ENCODE measurements at regions of chr4 and their contacts with region 1.

Region 1: DNA sequence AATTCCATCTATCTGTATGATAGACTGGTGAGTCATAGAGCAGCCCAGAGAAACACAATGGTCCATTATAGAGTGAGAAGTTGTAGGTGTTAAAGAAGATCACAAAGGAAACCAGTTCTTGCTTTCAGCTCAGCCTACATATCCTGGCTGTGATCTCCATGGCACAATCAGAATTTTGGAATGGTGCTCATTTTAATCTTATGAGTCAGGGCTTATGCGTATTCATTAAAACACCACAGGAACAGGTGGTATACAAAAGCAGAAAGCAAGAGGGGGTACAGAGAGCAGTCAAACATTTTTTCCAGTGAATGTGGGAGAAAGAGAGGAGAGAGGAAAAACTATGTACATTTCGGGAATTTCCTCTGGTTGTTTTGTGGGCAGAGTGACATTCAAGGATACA is 126.9 kb downstream of the MFAP3L start:
- DNase-seq: peak; percentile 34
- ATAC-seq: peak; percentile 31; the same call in 1 of the 2 replicates
- H3K4me3 ChIP-seq: no peak overlapping the region
- H3K27ac ChIP-seq: no peak overlapping the region
- H3K4me1 ChIP-seq: no peaks in the 10 kb centered on the region
- H3K27me3 ChIP-seq: peaks cover 17% of the 10 kb centered on the region
- CTCF ChIP-seq: no peak

Region 2: GRCh38 chr4:169940450-169940849 is 41.2 kb after region 1 on chr4:
- CTCF ChIA-PET with region 1: no interaction called
- POLR2A ChIA-PET with region 1: no interaction called
- intact Hi-C with region 1: no loop called
- DNase-seq: no peak
- ATAC-seq: no peak
- H3K4me3 ChIP-seq: no peak overlapping the region
- H3K27ac ChIP-seq: no peak overlapping the region
- H3K4me1 ChIP-seq: no peaks in the 10 kb centered on the region
- H3K27me3 ChIP-seq: no peaks in the 10 kb centered on the region
- CTCF ChIP-seq: no peak

Region 3: DNA sequence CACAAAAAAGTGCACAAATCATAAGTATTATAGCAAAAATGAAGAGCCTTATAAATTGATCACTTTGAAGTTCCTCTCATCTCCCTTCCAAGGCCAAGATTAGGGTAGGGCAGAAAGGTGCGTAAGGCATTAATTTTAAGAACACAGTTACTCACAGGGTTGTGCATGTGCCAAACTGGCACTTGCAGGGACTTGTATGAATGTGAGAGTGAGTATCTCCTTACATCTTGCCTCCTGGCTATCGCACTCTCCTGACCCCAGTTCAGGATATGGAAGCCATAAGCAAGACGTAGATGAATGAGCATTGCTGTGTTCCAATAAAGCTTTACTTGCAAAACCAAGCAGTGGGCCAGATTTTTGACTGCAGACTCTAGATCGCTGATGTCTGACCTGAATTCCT is 700.6 kb after region 1 on chr4:
- CTCF ChIA-PET with region 1: no interaction called
- POLR2A ChIA-PET with region 1: no interaction called
- intact Hi-C with region 1: no loop called
- DNase-seq: no peak
- ATAC-seq: no peak
- H3K4me3 ChIP-seq: no peak overlapping the region
- H3K27ac ChIP-seq: no peak overlapping the region
- H3K4me1 ChIP-seq: no peaks in the 10 kb centered on the region
- H3K27me3 ChIP-seq: no peaks in the 10 kb centered on the region
- CTCF ChIP-seq: no peak

Region 4: DNA sequence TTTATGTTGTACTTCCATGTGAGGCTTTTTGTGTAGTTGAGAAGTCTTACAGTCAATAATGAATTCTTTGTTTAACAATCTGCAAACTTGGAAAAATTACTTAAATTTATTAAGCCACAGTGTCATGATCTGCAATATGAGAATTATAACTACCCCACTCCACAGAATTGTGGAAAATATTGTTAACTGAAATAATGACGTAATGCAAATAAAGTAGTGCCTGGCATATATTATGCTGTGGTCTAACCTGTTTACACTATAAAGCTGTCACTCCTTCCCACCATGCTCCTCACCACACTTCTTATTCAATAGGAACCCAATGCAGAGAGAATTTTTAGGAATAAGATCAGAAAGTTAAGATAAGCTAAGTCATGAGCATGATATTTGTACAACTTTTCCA is 1281.8 kb after region 1 on chr4:
- CTCF ChIA-PET with region 1: no interaction called
- POLR2A ChIA-PET with region 1: interaction called, 19 read pairs
- intact Hi-C with region 1: no loop called
- DNase-seq: no peak
- ATAC-seq: no peak
- H3K4me3 ChIP-seq: no peak overlapping the region
- H3K27ac ChIP-seq: no peak overlapping the region
- H3K4me1 ChIP-seq: no peaks in the 10 kb centered on the region
- H3K27me3 ChIP-seq: no peaks in the 10 kb centered on the region
- CTCF ChIP-seq: no peak

Measured in PC-3 (cell line).